ENCODE measurements at regions of chr11 and their contacts with region 1.

Region 1: DNA sequence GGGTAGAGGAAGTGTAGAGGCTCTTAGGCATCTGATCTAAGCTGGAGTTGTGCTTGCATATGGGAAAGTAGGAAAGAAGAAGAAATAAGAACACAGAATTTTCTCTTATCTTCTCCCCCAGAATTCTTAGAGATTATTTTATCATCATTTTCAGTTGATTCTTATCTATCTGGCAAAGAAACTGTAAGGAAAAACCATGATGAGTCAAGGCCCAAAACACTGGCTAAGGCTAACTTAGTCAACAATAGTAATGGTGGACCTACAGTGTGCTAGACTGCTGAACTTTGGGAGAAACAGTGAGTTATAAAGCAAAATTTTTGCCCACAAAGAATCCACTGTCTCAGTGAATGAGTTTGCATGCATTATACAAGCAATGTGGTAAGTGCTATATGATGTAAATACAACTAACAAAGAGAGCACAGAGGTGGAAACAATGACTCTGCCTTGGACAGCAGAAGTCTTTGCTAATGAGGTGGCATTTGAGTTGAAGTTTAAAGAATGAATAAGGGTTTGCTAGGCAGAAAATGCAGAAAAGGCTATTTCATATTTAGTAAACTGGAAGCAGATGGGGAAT is 344.5 kb upstream of the PLET1 start:
- DNase-seq: no peak
- H3K4me3 ChIP-seq: no peak overlapping the region
- H3K27ac ChIP-seq: peak overlapping the region in 54 of 59 donors; percentile 12 to 88 (median 68)
- H3K27me3 ChIP-seq: no peaks in the 10 kb centered on the region
- CTCF ChIP-seq: no peak

Region 2: DNA sequence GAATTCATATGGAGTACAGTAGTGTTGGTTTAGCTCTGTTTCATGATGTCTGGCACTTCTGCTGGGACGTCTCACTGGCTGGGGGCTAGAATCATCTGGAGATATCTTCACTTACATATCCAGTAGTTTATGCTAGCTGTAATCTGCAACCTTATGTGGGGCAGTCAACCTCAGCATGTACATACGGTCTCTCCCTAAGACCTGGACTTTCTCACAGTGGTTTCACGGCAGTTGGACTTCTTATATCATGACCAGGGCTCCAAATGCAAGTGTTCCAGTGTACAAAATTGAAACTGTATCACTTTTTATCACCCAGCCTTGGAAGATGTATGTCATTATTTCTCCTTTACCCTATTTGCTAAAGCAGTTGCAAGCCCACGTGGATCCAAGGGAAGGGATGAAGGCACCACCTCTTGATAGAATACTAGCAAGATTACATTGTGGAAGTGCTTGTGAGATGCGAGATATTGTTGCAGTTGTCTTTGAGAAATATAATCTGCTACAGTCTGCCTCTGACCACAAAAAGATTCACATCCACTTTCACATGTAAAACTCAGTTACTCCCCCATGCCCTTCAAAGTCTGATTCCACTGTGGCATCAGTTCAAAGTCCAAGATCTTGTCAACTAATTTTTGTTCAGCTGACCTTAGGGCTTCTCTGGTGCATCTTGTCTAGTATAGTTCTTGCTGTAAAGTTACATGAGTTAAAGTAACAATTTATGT is 39.4 kb after region 1 on chr11:
- intact Hi-C with region 1: loop called in 1 of 2 experiments (anchors 5 kb)
- DNase-seq: no peak
- H3K4me3 ChIP-seq: no peak overlapping the region
- H3K27ac ChIP-seq: no peak overlapping the region
- H3K27me3 ChIP-seq: no peaks in the 10 kb centered on the region
- CTCF ChIP-seq: no peak

Measured in dorsolateral prefrontal cortex (tissue), 120 donors.